Prostate gland (tissue), 2 donors: ENCODE measurements at regions of chr20 and their contacts with region 1.

Region 1: GRCh38 chr20:60057123-60057801 is 99.0 kb downstream of the CDH26 start:
- DNase-seq: peak; percentile 63
- H3K4me3 ChIP-seq: no peak overlapping the region
- H3K27ac ChIP-seq: no peak overlapping the region
- H3K4me1 ChIP-seq: no peaks in the 10 kb centered on the region
- H3K27me3 ChIP-seq: no peaks in the 10 kb centered on the region
- CTCF ChIP-seq: peak; percentile 72 to 84 (median 80)
- POLR2A ChIP-seq: no peak

Region 2: GRCh38 chr20:59663513-59664060 is 393.7 kb before region 1 on chr20:
- intact Hi-C with region 1: no loop called
- DNase-seq: no peak
- H3K4me3 ChIP-seq: no peak overlapping the region
- H3K27ac ChIP-seq: no peak overlapping the region
- H3K4me1 ChIP-seq: no peaks in the 10 kb centered on the region
- H3K27me3 ChIP-seq: peaks cover 7% of the 10 kb centered on the region
- CTCF ChIP-seq: no peak
- POLR2A ChIP-seq: no peak

Region 3: GRCh38 chr20:59940174-59940971 is 116.9 kb before region 1 on chr20 and contains the starts of genes FAM217B and PPP1R3D:
- intact Hi-C with region 1: loop called (anchors 10 kb)
- DNase-seq: peak; percentile 100
- H3K4me3 ChIP-seq: peak within 1 kb of the TSS; percentile 60 to 78
- H3K27ac ChIP-seq: peak within 1 kb of the TSS; percentile 92 to 96
- H3K4me1 ChIP-seq: peaks cover 24% of the 10 kb centered on the region
- H3K27me3 ChIP-seq: no peaks in the 10 kb centered on the region
- CTCF ChIP-seq: peak; percentile 13 to 53 (median 23)
- POLR2A ChIP-seq: peak; percentile 91
- total RNA-seq, gene FAM217B: 13.7 to 18.2 TPM
- total RNA-seq, gene PPP1R3D: 16.0 to 16.6 TPM

Region 4: GRCh38 chr20:60262967-60263603 is 205.8 kb after region 1 on chr20:
- intact Hi-C with region 1: loop called (anchors 10 kb)
- DNase-seq: no peak
- H3K4me3 ChIP-seq: no peak overlapping the region
- H3K27ac ChIP-seq: no peak overlapping the region
- H3K4me1 ChIP-seq: no peaks in the 10 kb centered on the region
- H3K27me3 ChIP-seq: no peaks in the 10 kb centered on the region
- CTCF ChIP-seq: peak in 3 of 4 experiments; percentile 23 to 29 (median 24)
- POLR2A ChIP-seq: no peak

Region 5: DNA sequence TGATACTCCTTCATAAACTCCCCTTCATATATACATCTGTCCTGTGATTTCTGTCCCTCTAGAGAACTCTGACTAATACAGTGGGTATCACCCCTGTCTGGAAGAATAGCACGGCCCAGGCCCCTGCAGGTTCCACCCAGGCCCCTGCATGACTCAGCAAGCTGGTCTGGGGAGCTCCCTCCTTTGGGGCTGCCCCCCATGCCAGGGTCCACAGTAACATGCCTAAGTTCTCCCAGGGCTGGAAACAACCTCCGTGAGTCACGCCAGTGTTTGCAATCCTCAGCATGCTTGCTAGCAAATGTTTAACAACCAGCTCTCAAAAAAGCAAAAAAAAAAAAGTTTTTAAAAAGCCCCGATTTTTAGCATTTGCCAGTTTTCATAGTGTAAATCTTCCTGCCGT is 1060.5 kb after region 1 on chr20:
- intact Hi-C with region 1: loop called (anchors 10 kb)
- DNase-seq: no peak
- H3K4me3 ChIP-seq: no peak overlapping the region
- H3K27ac ChIP-seq: no peak overlapping the region
- H3K4me1 ChIP-seq: no peaks in the 10 kb centered on the region
- H3K27me3 ChIP-seq: no peaks in the 10 kb centered on the region
- CTCF ChIP-seq: no peak
- POLR2A ChIP-seq: no peak

Region 6: GRCh38 chr20:61896058-61896961 is 1839.0 kb after region 1 on chr20:
- intact Hi-C with region 1: loop called (anchors 5 kb)
- DNase-seq: no peak
- H3K4me3 ChIP-seq: no peak overlapping the region
- H3K27ac ChIP-seq: no peak overlapping the region
- H3K4me1 ChIP-seq: no peaks in the 10 kb centered on the region
- H3K27me3 ChIP-seq: peaks cover 6% of the 10 kb centered on the region
- CTCF ChIP-seq: peak in 3 of 4 experiments; percentile 33 to 64 (median 50)
- POLR2A ChIP-seq: no peak